Dendritic cell treated with granulocyte-macrophage colony-stimulating factor and Interleukin-4, amounts not matched to agents 40 ng/mL and 50 ng/mL, for 4 days (primary cell): ENCODE measurements at regions of chr1 and their contacts with region 1.

Region 1: DNA sequence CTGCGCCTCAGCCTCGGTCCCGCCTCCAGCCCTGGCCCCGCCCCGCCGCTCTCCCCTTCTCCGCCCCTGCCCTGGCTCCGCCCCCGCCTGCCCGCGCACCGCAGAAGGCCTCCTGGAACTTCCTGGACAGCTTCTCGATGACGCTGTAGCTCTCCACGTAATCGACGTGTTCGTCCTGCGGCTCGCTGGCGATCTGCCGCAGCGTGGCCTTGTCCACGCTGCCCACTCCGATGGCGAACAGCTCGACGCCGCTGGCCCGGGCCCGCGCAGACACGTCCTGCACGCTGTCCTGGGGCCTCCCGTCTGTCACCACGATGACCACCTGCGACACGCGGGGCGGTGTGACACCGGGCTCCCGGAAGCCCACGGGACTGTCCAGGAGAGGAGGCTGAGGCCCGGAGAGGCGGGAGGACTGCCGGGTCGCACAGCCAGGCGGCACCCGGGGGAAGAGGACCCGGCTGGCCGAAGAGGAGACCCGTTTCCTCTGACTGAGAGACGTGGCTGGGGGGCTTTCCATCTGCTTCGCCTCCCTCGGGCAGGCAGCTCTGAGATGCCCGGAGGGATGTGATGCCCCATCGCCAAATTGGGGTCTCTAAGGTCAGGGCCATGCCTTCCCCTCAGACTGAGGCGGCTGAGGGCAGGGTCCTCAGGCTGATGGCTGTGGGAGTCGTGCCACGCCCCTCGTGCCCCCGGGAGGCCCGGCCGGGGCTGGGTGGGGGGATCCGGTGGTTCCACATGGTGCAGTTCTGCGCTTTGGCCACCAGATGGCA is 4.6 kb downstream of the MATN1 start:
- H3K4me3 Mint-ChIP-seq: peak overlapping the region; percentile 86
- H3K27ac Mint-ChIP-seq: peak overlapping the region; percentile 99
- H3K4me1 Mint-ChIP-seq: peaks cover 32% of the 10 kb centered on the region
- H3K27me3 Mint-ChIP-seq: peaks cover 9% of the 10 kb centered on the region

Region 2: GRCh38 chr1:29235955-29236684 is 1482.7 kb before region 1 on chr1 and contains the start of gene PTPRU:
- intact Hi-C with region 1: loop called (anchors 5 kb)
- H3K4me3 Mint-ChIP-seq: peak within 1 kb of the TSS; percentile 79
- H3K27ac Mint-ChIP-seq: peak within 1 kb of the TSS; percentile 6
- H3K4me1 Mint-ChIP-seq: peaks cover 23% of the 10 kb centered on the region
- H3K27me3 Mint-ChIP-seq: peaks cover 62% of the 10 kb centered on the region

Region 3: GRCh38 chr1:30586671-30587070 is 132.2 kb before region 1 on chr1:
- intact Hi-C with region 1: no loop called
- H3K4me3 Mint-ChIP-seq: no peak overlapping the region
- H3K27ac Mint-ChIP-seq: no peak overlapping the region
- H3K4me1 Mint-ChIP-seq: no peaks in the 10 kb centered on the region
- H3K27me3 Mint-ChIP-seq: peaks cover 14% of the 10 kb centered on the region

Region 4: DNA sequence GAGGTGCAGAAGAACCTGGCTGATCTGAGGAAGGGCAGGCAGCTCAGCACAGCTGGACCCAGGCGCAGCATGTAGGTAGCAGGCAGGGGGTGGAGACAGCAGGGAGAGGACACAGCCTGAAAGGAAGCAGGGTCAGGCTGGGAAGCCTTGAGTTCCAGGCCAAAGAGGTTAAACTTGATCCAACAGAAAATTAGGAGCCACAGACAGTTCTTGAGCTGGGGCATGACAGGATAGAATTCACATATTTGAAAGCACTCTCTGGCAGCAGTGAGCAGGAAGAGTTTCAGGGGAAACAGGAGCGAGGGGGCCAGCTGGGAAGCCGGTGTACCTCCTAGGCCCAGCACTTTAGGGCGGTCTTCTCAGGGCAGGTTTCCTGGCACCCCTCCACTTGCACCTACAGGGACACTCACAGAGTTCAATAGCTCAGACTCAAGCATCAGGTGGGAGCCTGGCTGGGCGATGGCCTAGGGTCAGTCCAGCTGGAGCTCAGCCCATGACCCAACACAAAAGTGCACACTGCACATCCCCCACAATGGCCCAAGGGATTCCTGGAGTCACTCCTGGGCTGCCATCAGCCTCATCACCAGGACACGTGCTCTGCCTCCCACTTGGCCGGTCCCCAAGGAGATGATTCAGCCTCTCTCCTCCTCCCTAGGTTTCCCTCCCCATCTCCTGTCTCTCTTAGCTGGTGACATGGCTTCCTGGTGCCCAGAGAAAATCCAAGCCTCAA is 18.1 kb before region 1 on chr1:
- intact Hi-C with region 1: no loop called
- H3K4me3 Mint-ChIP-seq: no peak overlapping the region
- H3K27ac Mint-ChIP-seq: no peak overlapping the region
- H3K4me1 Mint-ChIP-seq: no peaks in the 10 kb centered on the region
- H3K27me3 Mint-ChIP-seq: peaks cover 6% of the 10 kb centered on the region

Region 5: GRCh38 chr1:30756545-30757195 is 37.8 kb after region 1 on chr1:
- intact Hi-C with region 1: loop called (anchors 5 kb)
- H3K4me3 Mint-ChIP-seq: peak overlapping the region; percentile 95
- H3K27ac Mint-ChIP-seq: peak overlapping the region; percentile 98
- H3K4me1 Mint-ChIP-seq: peaks cover 91% of the 10 kb centered on the region
- H3K27me3 Mint-ChIP-seq: no peaks in the 10 kb centered on the region

Region 6: GRCh38 chr1:30779294-30780071 is 60.7 kb after region 1 on chr1:
- intact Hi-C with region 1: loop called (anchors 1 kb)
- H3K4me3 Mint-ChIP-seq: no peak overlapping the region
- H3K27ac Mint-ChIP-seq: peak overlapping the region; percentile 91
- H3K4me1 Mint-ChIP-seq: peaks cover 51% of the 10 kb centered on the region
- H3K27me3 Mint-ChIP-seq: peaks cover 12% of the 10 kb centered on the region

Region 7: DNA sequence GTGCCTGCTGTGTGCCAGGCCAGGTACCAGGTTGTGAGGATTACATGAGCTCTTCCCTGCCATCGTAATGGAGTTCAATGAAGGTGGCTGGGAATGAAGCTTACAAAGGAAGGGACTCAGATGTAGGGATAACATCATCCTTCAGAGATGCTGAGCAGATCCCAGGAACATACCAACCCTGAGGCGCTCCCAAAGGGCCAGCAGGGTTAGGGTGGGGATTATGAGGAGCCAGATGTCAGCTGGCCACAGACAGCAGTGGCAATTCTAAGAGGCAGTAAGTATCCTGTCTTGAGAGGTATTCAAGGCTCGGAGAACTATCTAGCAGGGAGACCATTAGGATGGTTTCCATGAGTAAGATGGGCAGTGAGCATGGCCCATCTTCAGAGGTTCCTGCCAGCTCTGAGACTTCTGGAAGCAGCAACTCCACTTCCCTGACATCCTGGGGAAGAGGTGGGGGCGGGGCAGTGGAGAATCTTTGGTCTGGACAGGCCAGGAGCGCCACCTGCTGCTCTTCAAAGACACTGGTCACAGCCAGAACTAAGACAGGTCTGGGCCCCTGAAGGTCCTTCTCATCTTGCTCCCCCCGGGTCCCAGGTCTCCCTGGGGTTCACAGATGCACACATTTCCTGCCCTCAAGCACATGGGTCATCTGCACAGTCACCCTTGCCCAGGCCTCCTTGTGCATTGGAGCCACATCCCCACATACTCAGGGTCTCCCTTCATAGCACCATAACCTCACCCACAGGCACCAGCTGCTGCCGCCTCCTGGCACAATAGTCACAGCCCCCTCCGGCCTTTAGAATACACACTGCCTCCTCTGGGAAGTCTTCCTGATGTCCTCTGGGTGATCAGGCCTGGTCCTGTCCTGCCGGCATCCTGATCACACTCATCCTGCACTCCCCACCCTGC is 192.5 kb after region 1 on chr1:
- intact Hi-C with region 1: loop called (anchors 2 kb)
- H3K4me3 Mint-ChIP-seq: no peak overlapping the region
- H3K27ac Mint-ChIP-seq: peak overlapping the region; percentile 97
- H3K4me1 Mint-ChIP-seq: peaks cover 83% of the 10 kb centered on the region
- H3K27me3 Mint-ChIP-seq: peaks cover 23% of the 10 kb centered on the region

Region 8: GRCh38 chr1:30929135-30929889 is 210.5 kb after region 1 on chr1:
- intact Hi-C with region 1: loop called (anchors 5 kb)
- H3K4me3 Mint-ChIP-seq: no peak overlapping the region
- H3K27ac Mint-ChIP-seq: no peak overlapping the region
- H3K4me1 Mint-ChIP-seq: peaks cover 22% of the 10 kb centered on the region
- H3K27me3 Mint-ChIP-seq: no peaks in the 10 kb centered on the region